GM13976 (cell line): ENCODE measurements at regions of chr18 and their contacts with region 1.

Region 1: DNA sequence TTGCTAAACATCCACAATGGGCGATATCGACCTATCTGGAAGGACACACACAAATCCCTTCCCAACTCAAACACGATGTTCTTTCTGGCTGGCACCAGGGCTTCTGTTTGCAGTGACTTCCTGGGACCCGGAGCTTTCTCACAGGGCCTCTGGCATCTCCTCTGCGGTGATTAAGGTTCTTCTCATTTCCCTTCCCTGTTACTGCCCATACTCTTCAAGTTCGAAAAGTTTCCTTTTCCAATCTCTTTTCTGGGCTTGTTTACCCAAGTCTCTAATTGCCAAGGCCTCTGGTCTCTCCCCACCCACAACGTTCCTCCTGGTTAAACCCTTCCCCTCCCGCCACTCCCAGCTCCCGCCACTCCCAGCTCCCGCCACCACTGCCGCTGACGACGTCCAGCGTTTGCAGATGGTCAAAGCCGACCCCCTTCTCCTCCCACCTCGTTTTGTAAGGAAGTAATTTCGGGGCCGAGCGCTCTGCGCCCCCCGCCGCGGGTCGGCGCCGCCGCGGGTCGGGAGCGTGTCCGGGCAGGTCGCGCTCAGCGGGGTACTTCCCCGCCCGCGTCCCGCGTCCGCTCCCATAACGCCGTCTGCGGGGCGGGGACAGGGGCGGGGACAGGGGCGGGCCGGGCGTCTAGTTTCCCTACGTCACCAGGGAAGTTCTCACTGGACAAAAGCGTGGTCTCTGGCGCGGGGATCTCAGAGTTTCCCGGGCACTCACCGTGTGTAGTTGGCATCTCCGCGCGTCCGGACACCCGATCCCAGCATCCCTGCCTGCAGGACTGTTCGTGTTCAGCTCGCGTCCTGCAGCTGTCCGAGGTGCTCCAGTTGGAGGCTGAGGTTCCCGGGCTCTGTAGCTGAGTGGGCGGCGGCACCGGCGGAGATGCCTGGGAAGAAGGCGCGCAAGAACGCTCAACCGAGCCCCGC is at the start of gene PMAIP1:
- DNase-seq: peak; percentile 94
- CTCF ChIP-seq: peak; percentile 5

Region 2: GRCh38 chr18:59593291-59593717 is 306.3 kb before region 1 on chr18:
- in situ Hi-C with region 1: no loop called
- DNase-seq: no peak
- CTCF ChIP-seq: no peak

Region 3: DNA sequence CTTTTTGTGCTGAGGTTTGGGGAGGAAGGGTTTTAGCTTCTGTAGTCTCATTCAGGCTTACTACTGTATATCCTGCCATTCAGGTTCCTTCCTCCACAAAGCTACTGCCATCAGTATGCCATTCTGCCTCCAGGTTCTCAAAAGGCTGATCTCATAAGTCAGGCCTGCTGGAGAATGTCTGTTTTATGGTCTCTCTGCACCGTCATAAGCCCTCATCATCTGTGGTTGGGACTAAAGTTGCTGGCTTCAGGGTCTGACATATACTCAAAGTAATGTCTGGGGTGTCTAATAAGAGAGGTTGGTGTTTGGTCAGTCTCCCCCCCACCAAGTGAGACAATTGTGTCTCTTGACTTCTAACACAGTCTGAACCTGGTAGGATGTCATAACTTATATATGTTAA is 166.1 kb before region 1 on chr18:
- in situ Hi-C with region 1: no loop called
- DNase-seq: no peak
- CTCF ChIP-seq: no peak

Region 4: DNA sequence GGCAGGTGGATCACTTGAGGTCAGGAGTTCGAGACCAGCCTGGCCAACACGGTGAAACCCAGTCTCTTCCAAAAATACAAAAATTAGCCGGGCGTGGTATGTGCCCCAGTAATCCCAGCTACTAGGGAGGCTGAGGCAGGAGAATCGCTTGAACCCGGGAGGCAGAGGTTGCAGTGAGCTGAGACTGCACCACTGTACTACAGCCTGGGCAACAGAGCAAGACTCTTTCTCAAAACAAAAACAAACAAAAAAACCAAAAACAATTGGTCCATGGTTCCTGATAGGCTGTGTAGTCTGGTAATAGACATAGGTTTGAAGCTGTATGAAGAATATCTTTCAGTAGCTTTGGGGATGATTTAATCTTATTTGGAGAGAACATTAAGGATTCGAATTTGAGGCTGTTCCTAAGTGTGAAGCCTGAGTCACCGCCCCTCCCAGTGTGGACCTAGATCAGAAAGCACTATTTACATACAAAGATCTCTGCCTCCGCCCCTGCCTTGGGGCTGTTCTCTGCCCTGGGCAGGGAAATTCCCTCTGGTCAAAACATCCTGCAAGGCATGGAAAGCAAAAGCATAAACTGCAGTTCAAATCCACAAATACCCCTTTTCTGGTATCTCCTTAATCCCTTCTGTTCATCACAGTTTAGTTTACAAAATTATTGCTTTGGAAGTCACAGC is 52.6 kb before region 1 on chr18:
- in situ Hi-C with region 1: loop called (anchors 10 kb)
- DNase-seq: peak; percentile 84
- CTCF ChIP-seq: no peak

Region 5: DNA sequence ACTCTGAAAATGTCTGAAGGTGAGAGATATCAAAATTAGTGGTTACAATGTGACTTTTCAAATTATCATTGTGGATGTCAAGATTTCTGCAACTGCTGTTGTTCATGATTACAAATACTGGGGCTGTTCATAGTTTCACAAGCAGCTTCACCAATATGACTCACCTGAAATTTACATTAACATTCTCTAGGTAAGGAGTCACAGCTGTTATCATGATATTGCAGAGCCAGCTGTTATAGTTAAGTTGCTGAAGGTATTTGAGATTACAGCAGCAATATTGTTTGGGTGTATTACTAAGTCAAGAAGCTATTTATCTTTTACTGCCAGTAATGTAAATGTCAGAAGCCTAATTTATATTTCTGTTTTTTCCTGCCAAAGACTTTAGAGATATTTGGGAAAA is 333.0 kb after region 1 on chr18:
- in situ Hi-C with region 1: no loop called
- DNase-seq: no peak
- CTCF ChIP-seq: no peak